ENCODE measurements at regions of chr5 and their contacts with region 1.

Region 1: DNA sequence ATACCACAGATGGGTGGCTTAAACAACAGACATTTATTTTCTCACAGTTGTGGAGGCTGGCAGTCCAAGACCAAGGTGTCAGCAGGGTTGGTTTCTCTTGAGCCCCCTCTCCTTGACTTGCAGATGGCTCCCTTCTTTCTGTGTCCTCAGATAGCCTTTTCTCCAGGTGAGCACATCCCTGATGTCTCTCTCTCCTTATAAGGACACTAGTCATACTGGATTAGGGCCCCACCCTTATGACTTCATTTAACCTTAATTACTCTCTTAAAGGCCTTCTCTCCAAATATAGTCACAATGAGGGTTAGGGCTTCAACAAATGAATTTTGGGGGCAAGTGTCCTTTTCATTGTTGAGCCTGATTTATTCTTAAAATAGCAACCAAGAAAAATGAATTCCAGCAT is 14.7 kb downstream of the PTGER4 start:
- DNase-seq: no peak
- H3K4me3 ChIP-seq: no peak overlapping the region
- H3K27ac ChIP-seq: no peak overlapping the region
- H3K4me1 ChIP-seq: no peaks in the 10 kb centered on the region
- H3K27me3 ChIP-seq: no peaks in the 10 kb centered on the region
- CTCF ChIP-seq: no peak
- POLR2A ChIP-seq: no peak

Region 2: DNA sequence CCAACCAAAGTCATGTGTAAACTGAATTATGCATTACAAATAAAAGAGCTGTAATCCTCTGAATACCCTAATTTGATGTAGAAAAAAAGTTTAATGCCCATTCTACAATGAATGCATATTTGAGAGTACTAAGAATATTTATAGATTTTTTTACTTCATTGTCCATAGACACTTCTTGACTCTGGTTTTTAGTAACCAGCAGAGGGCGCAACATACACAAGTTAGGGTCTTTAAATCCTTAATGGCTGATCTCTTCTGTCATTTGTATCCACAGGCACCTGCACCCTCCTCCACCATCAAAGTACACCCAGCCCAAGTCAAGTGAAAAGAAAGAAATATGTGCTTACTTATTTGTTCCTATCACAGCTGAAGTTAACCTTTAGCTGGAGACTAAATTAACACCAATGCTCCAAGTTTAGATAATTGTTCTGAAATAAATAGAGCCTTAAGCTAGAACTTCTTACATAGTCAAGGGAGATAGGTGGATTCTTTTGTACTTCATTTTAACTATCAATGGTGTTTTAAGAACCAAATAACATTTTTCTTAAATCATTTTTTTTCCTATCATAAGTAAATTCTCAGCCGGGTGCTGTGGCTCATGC is 745.5 kb before region 1 on chr5:
- intact Hi-C with region 1: loop called (anchors 5 kb)
- DNase-seq: peak; percentile 42 to 50
- H3K4me3 ChIP-seq: no peak overlapping the region
- H3K27ac ChIP-seq: no peak overlapping the region
- H3K4me1 ChIP-seq: no peaks in the 10 kb centered on the region
- H3K27me3 ChIP-seq: no peaks in the 10 kb centered on the region
- CTCF ChIP-seq: peak; percentile 38 to 68 (median 52)
- POLR2A ChIP-seq: no peak